RWPE1 (cell line): ENCODE measurements at regions of chr12 and their contacts with region 1.

Region 1: DNA sequence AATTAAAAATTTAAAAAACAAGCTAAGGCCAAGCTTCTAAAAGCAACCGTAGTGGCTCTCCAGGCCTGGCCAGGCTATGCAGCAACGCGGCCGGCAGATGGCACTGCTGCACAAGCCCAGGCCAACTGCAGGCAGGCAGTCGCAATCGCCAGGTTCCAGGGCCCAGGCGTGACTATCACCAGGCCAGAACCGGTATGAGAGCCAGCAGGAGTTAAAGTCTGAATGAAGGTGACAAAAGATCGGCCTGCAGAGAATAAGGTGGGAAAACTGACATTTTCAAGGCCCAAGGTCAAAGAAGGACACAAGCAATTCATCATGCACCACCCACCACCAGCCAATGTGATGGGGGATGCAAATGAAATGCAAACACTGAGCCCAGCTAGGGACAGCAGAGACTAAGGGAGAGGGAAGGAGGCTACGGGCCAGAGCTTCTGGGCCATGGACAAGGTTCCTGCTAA is 43.6 kb upstream of the ANO2 start:
- DNase-seq: peak; percentile 67
- H3K27ac ChIP-seq: no peak overlapping the region
- CTCF ChIP-seq: peak; percentile 87

Region 2: DNA sequence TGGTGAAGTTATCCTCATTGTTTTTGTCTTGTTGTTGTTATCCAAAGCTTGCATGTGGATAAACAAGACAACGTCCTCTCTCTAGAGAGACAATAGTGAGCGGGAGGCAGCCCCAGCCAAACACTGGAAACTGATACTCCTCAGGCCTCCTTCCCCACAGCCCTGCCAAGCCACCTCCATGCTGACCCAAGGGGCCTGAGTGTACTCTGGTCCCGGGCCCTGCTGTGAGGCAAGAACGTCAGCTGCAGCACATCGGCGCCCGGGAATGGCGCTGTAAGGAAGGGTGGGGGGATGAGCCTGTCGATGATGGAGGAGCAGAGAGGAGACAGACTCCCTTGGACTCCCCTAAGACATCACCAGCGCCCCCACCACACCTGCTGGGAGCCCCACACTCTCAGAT is 127.3 kb before region 1 on chr12:
- CTCF ChIA-PET with region 1: no interaction called
- POLR2A ChIA-PET with region 1: no interaction called
- DNase-seq: no peak
- H3K27ac ChIP-seq: no peak overlapping the region
- CTCF ChIP-seq: no peak

Region 3: DNA sequence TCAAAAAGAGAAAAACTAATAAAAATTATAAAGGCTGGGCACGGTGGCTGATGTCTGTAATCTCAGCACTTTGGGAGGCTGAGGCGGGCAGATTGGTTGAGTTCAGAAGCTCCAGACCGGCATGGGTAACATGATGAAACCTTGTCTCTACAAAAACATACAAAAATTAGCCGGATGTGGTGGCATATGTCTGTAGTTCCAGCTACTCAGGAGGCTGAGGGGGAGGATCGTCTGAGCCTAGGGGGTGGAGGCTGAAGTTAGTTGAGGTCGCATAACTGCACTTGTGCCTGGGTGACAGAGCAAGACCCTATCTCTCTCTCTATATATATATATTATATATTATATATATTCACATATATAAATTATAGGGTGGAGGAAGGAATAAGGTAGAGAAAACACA is 11.1 kb before region 1 on chr12:
- CTCF ChIA-PET with region 1: interaction called, 10 read pairs
- POLR2A ChIA-PET with region 1: no interaction called
- DNase-seq: no peak
- H3K27ac ChIP-seq: no peak overlapping the region
- CTCF ChIP-seq: no peak

Region 4: DNA sequence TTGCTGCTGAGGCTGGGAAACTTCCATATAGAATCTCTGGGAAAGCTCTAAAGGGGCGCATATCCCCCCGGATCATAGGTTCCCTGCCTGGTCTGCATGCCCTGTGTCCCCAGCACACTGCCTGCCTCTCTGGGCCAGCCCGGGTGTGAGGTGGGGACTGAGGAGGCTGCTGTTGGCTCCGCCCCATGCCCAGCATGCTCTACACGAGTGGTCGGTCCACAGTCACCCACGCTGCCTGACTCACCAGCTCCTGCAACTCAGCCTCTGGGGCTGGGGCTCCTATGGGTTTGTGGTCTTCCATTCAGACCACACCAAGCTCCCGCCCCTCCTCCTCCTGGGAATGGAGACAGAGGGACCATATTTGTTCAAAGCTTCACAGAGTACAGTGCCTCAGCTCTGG is 44.9 kb after region 1 on chr12:
- CTCF ChIA-PET with region 1: interaction called, 74 read pairs
- POLR2A ChIA-PET with region 1: no interaction called
- DNase-seq: no peak
- H3K27ac ChIP-seq: no peak overlapping the region
- CTCF ChIP-seq: no peak

Region 5: DNA sequence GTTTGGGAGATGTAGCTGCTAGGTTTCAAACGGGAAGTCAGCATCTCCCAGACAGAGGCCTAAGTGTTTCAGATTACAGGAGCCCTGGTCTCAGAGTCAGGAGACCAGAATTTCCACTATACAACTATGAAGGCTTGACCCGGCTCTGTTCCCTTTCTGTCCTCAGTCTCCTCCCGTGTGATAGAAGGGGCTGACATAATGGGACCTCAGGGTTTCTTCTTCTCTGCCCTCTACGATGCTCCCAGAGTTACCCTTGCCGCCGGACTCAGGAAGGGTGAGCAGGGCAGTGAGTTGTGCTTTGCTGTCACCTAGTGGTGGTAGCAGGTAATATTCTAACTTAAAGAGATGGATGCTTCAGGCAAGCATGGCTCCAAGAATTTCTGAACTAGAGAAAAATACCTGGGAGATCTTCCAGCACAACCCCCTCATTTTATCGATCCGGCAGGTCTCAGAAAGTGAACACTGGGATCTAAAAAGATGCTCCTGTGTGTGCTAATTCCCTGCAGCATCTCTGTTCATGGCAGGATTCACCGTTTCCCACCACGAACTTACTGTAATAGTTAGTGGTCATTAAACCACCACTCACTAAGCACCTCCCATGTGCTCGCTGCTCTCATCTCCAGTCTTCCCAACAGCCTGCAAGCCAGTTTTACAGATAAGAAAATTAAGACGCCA is 51.3 kb after region 1 on chr12:
- CTCF ChIA-PET with region 1: interaction called, 74 read pairs
- POLR2A ChIA-PET with region 1: no interaction called
- DNase-seq: peak; percentile 63
- H3K27ac ChIP-seq: no peak overlapping the region
- CTCF ChIP-seq: peak; percentile 71

Region 6: GRCh38 chr12:6182116-6182898 is 193.6 kb after region 1 on chr12:
- CTCF ChIA-PET with region 1: no interaction called
- POLR2A ChIA-PET with region 1: no interaction called
- DNase-seq: peak; percentile 52
- H3K27ac ChIP-seq: peak overlapping the region; percentile 81
- CTCF ChIP-seq: no peak

Region 7: DNA sequence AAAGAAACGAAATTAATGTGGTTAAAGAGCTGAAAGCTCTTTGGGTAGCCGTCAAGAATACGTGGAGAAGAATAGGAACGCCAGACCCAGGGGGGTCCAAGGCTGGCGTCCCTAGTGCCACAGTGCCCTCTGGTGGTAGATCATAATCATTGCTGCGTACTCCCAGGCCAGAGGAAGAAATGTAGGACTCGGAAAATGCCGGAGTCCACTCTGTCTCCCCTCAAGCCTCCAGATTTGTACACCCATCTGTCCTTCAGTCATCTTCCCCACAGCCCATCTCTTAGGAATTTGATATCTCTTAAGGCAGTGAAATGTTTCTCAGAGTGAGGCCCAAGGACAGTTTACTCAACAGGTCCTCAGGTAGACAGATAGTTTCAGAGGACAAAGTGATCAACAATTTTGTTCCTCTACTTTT is 296.4 kb after region 1 on chr12:
- CTCF ChIA-PET with region 1: interaction called, 11 read pairs
- POLR2A ChIA-PET with region 1: no interaction called
- DNase-seq: peak; percentile 85
- H3K27ac ChIP-seq: peak overlapping the region; percentile 69; the same call in 1 of the 2 replicates
- CTCF ChIP-seq: peak; percentile 71